ENCODE measurements at regions of chr10 and their contacts with region 1.

Region 1: DNA sequence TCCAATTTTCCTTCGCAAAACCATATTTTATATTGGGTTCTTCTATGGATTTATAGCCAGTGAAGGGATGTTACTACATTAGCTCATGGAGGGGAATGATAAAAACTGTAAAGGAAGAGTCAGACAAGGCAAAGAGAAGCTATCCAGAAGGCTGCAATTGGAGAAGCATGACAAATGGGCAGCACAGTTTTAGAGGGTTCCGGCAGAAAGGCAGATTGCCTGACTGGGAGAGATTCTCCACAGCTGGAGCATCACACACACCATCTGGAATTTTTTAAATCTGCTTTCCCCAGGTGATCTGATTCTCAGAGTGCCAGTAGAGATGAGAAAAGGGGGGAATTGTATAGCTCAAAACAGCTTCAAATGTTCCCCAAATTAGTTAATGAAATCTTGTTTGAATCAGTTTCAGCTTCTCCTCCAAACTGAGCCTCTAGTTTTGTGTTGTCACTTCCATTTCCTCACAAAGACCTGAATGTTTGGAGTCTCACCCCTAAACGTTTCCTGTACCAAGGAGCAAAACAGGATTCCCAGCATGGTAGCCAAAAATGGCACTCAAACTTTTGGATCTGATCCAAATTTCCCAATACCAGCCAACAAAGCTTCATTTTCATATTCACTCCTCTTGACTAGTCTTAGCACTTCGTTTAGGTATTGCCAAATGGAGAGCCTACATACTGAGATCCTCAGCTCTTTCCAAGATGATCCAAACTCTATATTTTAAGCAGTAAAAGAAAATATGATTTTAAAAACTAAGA is 177.5 kb downstream of the HPSE2 start:
- DNase-seq: no peak
- ATAC-seq: no peak
- H3K4me3 ChIP-seq: no peak overlapping the region
- H3K27ac ChIP-seq: no peak overlapping the region
- H3K4me1 ChIP-seq: no peaks in the 10 kb centered on the region
- H3K27me3 ChIP-seq: no peaks in the 10 kb centered on the region; the same call in 1 of the 2 replicates
- CTCF ChIP-seq: no peak

Region 2: GRCh38 chr10:98135222-98135899 is 922.8 kb before region 1 on chr10:
- CTCF ChIA-PET with region 1: no interaction called
- POLR2A ChIA-PET with region 1: interaction called, 14 read pairs
- in situ Hi-C with region 1: no loop called
- intact Hi-C with region 1: no loop called
- DNase-seq: no peak
- ATAC-seq: peak; percentile 20
- H3K4me3 ChIP-seq: peak overlapping the region; percentile 69 to 89
- H3K27ac ChIP-seq: peak overlapping the region; percentile 96
- H3K4me1 ChIP-seq: peaks cover 32% of the 10 kb centered on the region
- H3K27me3 ChIP-seq: no peaks in the 10 kb centered on the region
- CTCF ChIP-seq: no peak

Region 3: DNA sequence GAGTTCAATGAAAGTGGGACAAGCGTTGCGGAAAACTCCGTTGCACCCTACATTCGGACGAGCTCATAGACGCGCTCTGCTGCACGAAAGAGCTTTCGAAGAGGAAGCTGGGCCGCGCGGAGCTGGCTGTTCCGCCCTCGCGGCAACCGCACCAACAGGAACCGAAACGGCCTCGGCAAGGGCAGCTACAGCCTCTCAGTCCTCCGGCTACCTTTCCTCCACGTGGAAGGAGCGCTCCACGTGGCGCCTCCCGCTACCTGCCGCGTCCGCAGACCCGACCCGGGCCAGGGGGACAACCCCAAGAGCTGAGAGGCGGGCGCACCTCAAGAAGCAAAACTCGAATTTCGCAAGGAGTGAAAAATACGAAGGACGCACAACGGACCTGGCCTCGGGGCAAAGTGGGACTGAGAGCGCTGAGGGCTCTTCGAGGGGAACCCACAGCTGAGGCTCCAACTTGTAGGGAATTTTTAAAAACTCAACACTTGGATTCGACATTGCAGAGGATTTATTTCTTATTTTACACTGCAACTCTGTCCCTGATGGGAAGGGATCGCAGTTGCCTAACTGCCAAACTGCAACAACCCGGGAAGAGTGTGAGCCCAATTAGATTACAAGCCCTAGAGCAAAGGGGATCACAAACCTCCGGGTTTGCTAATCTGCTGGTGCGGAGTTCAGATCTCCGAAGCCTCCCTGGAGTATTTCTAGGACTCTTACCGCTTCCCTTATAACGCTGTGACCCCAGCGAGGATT is 176.1 kb after region 1 on chr10:
- CTCF ChIA-PET with region 1: no interaction called
- POLR2A ChIA-PET with region 1: no interaction called
- in situ Hi-C with region 1: no loop called
- intact Hi-C with region 1: loop called (anchors 10 kb)
- DNase-seq: no peak
- ATAC-seq: no peak
- H3K4me3 ChIP-seq: no peak overlapping the region
- H3K27ac ChIP-seq: no peak overlapping the region
- H3K4me1 ChIP-seq: no peaks in the 10 kb centered on the region; the same call in 1 of the 2 replicates
- H3K27me3 ChIP-seq: peaks cover 55% of the 10 kb centered on the region
- CTCF ChIP-seq: no peak